Activated CD4-positive, alpha-beta T cell treated with anti-CD3 and anti-CD28 coated beads, Interleukin-2, amount 10 ng/mL, durations not matched to agents 24 days and 14 days (primary cell): ENCODE measurements at regions of chr2 and their contacts with region 1.

Region 1: DNA sequence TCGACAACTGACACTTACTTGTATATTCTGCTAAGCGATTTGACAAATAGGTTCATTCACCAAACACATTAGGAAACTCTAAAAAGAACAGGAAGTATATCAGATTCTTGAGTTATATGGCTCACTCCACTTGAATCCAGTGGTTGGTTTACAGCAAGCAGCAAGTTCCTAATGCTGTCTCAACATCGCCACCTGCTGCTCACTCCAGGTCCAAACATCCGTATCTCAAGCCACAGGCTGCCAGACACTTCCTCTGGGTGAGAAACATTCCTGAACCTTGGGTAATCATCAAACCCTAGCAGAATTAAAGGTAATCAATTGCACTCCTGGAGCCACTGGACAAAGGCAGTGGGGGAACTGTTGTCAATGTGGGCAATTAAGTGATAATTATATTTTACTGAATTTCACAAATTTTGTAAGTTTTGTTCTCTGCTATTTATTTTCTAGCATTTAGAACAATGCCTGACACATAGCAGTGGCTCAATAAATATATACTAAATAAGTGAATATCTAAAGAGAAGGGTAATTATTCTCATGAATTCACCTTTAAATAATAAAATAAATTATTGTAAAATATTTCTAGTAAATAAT is 107.1 kb upstream of the TTN start:
- DNase-seq: peak; percentile 91
- H3K4me3 Mint-ChIP-seq: no peak overlapping the region
- H3K27ac Mint-ChIP-seq: no peak overlapping the region
- H3K4me1 Mint-ChIP-seq: peaks cover 10% of the 10 kb centered on the region
- H3K27me3 Mint-ChIP-seq: no peaks in the 10 kb centered on the region

Region 2: GRCh38 chr2:178363252-178363651 is 551.1 kb before region 1 on chr2:
- intact Hi-C with region 1: no loop called
- DNase-seq: no peak
- H3K4me3 Mint-ChIP-seq: no peak overlapping the region
- H3K27ac Mint-ChIP-seq: no peak overlapping the region
- H3K4me1 Mint-ChIP-seq: no peaks in the 10 kb centered on the region
- H3K27me3 Mint-ChIP-seq: peaks cover 10% of the 10 kb centered on the region

Region 3: GRCh38 chr2:178761759-178762371 is 152.5 kb before region 1 on chr2:
- intact Hi-C with region 1: loop called (anchors 2 kb)
- DNase-seq: peak; percentile 82
- H3K4me3 Mint-ChIP-seq: no peak overlapping the region
- H3K27ac Mint-ChIP-seq: no peak overlapping the region
- H3K4me1 Mint-ChIP-seq: no peaks in the 10 kb centered on the region
- H3K27me3 Mint-ChIP-seq: no peaks in the 10 kb centered on the region

Region 4: DNA sequence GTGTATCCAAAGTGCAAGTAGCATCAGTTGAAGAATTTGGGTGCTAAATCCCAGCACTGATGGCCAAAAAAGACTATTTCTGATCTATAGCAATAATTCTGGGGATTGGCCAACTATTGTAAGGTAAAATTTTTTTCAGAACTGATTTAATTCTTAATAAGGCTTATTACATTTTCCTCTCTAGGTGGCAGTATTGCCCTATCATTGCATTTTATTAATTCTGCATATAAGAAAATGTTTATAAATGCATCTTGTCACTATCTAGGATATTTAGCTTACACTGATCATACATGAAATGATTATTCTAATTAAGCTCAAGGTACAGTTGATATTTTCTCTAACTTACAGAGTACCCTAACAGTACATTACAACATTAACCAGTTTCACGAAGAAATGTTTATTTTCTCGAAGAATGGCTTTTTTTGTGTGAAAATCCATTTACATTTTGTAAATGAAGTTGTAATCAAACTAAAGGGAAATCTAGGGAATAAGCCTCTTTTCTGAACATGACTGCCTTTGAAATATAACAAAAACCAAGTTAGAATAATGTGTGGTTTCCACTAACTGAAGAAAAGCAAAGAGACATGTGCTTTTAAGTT is 118.2 kb before region 1 on chr2:
- intact Hi-C with region 1: loop called (anchors 1 kb)
- DNase-seq: no peak
- H3K4me3 Mint-ChIP-seq: no peak overlapping the region
- H3K27ac Mint-ChIP-seq: no peak overlapping the region
- H3K4me1 Mint-ChIP-seq: no peaks in the 10 kb centered on the region
- H3K27me3 Mint-ChIP-seq: no peaks in the 10 kb centered on the region

Region 5: GRCh38 chr2:178891265-178891958 is 22.9 kb before region 1 on chr2:
- intact Hi-C with region 1: loop called (anchors 1 kb)
- DNase-seq: peak; percentile 90
- H3K4me3 Mint-ChIP-seq: no peak overlapping the region
- H3K27ac Mint-ChIP-seq: no peak overlapping the region
- H3K4me1 Mint-ChIP-seq: peaks cover 4% of the 10 kb centered on the region
- H3K27me3 Mint-ChIP-seq: no peaks in the 10 kb centered on the region